Esophagus muscularis mucosa (tissue), 4 donors: ENCODE measurements at regions of chr3 and their contacts with region 1.

Region 1: GRCh38 chr3:133805527-133806475 is at the start of gene SRPRB:
- DNase-seq: peak; percentile 97
- H3K4me3 ChIP-seq: peak within 1 kb of the TSS; percentile 71 to 92 (median 86)
- H3K27ac ChIP-seq: peak within 1 kb of the TSS; percentile 66 to 88 (median 70)
- H3K4me1 ChIP-seq: peaks cover 6 to 23% (median 13%) of the 10 kb centered on the region in 4 donors
- H3K27me3 ChIP-seq: no peaks in the 10 kb centered on the region
- CTCF ChIP-seq: no peak
- EP300 ChIP-seq: no peak
- POLR2A ChIP-seq: no peak
- total RNA-seq, gene SRPRB: 11.2 to 28.2 (median 18.5) TPM

Region 2: DNA sequence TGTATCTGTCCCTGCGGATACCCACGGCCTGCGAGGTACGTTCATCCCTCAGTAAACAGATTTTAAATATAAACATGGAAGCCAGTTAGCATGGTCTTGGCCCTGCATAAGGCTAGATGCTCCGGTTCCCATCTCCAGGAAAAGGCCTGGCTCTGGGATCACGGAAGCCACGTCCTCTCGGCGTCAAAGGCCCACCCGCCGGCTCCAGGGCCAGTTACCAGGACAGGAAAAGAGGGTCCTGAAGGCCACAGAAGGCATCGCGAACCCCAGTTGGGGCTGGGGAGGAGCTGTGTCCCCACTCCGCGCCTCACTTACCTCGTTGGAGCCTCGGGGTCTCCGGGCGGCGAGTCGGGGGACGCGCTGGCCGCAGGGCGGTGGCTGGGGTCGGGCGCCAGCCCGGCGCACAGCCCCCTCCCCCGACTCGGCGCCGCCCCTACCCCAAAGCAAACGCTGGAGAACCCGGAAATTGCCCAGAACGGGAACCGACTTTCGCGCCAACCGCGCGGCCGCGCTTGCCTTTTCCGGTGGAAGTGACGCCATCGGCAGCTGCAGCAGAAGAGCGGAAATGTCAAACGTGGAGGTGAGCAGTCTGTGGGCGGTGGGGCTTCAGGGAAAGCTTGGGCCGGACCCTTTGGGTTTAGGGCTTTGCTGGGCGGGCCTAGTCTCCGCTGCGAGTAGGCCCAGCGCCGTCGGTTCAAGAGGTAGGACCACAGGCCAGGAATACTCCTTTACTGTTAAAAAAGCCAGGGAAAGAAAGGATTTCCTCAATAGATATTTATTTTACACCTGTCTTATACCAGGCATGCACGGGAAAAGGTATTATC is 144.1 kb before region 1 on chr3 and contains the start of gene TOPBP1:
- intact Hi-C with region 1: loop called (anchors 5 kb)
- DNase-seq: no peak
- H3K4me3 ChIP-seq: peak within 1 kb of the TSS; percentile 79 to 98 (median 88)
- H3K27ac ChIP-seq: peak within 1 kb of the TSS; percentile 80 to 88 (median 84)
- H3K4me1 ChIP-seq: peaks cover 23 to 38% (median 24%) of the 10 kb centered on the region in 4 donors
- H3K27me3 ChIP-seq: no peaks in the 10 kb centered on the region
- CTCF ChIP-seq: no peak
- EP300 ChIP-seq: no peak
- POLR2A ChIP-seq: no peak
- total RNA-seq, gene TOPBP1: 15.6 to 29.1 (median 17.5) TPM